ENCODE measurements at regions of chr1 and their contacts with region 1.

Region 1: GRCh38 chr1:109099938-109100773 is 9.6 kb downstream of the TMEM167B start:
- DNase-seq: peak; percentile 96
- CTCF ChIP-seq: peak; percentile 92

Region 2: DNA sequence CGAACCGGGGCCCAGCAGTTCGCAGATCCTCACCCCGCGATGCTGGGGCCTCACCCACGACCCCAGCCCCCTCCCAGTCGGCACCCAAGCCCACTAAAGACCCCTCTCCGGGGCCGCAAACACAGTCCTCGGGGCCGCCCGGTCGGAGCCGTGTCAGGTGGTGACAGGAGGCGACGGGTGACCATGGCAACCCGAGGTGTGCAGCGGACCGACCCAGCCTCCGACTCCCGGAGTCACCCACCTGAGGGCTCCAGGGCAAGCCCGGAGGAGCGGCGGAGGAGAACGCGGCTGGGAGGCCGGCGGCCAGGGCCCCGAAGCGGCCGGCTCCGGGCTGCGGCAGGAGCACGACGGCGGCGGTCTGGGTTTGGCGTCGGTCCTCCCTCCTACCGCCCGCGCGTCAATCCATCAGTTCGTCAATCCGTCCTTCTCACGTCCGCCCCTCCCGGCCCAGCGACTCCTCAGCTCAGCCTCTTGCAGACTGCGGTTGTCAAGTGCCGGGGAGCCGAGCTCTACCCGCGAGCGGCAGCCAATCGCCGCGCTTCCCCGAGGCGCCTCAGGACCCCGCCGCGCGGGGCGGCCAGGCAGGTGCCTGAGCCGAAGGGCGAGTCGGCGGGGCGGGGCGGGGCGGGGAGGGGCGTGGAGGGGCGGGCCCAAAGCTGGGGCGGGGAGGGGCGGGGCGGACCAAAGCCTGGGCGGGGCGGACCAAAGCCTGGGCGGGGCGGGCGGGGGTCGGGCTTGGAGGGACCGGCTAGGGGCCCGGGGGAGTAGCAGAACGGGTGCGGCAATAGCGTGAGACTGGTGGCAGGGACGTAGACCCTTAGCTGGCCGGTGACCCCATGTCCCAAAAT is 58.3 kb before region 1 on chr1 and contains the start of gene WDR47:
- CTCF ChIA-PET with region 1: interaction called, 4 read pairs
- POLR2A ChIA-PET with region 1: interaction called, 16 read pairs
- DNase-seq: peak; percentile 99
- CTCF ChIP-seq: no peak

Region 3: GRCh38 chr1:109075531-109076490 is 24.3 kb before region 1 on chr1 and contains the start of gene TAF13:
- CTCF ChIA-PET with region 1: interaction called, 16 read pairs
- POLR2A ChIA-PET with region 1: interaction called, 6 read pairs
- DNase-seq: peak; percentile 94
- CTCF ChIP-seq: peak; percentile 8

Region 4: DNA sequence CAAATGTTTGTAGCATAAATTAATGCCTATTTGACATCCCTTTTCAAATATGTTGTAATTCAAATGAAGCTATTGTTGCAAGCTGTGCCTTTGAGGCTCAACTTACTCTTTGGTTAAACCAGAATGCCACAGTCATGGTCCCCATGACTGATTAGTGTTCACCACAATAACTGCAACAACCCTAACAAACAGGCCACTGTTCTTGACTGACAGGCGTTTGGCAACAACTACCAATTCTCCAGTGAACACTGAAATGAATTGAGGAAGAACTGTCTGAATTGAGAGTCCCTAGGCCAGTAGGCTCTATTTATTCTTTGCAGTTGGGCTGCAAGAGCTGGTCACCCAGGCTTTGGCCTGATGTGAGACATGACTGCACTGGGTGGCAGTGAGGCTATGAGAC is 16.2 kb before region 1 on chr1:
- CTCF ChIA-PET with region 1: interaction called, 23 read pairs
- POLR2A ChIA-PET with region 1: interaction called, 3 read pairs
- DNase-seq: no peak
- CTCF ChIP-seq: no peak

Measured in GM10248 (cell line).